Activated T-helper 1 cell treated with anti-CD3 and anti-CD28 coated beads, Interleukin-12 subunit alpha, Interleukin-12 subunit beta, Interleukin-2, Interleukin-4 antibody, amounts not matched to agents 30 ng/mL and 10 ng/mL and 1 ng/mL, durations not matched to agents 14 hours and 24 hours and 36 hours (primary cell): ENCODE measurements at regions of chr1 and their contacts with region 1.

Region 1: GRCh38 chr1:53220171-53220961 is at the start of gene CZIB:
- DNase-seq: peak; percentile 92
- H3K4me3 Mint-ChIP-seq: peak within 1 kb of the TSS; percentile 90
- H3K27ac Mint-ChIP-seq: peak within 1 kb of the TSS; percentile 97
- H3K4me1 Mint-ChIP-seq: peaks cover 30% of the 10 kb centered on the region
- H3K27me3 Mint-ChIP-seq: peaks cover 2% of the 10 kb centered on the region
- total RNA-seq, gene CZIB: 43.6 and 45.2 TPM in 2 replicates

Region 2: DNA sequence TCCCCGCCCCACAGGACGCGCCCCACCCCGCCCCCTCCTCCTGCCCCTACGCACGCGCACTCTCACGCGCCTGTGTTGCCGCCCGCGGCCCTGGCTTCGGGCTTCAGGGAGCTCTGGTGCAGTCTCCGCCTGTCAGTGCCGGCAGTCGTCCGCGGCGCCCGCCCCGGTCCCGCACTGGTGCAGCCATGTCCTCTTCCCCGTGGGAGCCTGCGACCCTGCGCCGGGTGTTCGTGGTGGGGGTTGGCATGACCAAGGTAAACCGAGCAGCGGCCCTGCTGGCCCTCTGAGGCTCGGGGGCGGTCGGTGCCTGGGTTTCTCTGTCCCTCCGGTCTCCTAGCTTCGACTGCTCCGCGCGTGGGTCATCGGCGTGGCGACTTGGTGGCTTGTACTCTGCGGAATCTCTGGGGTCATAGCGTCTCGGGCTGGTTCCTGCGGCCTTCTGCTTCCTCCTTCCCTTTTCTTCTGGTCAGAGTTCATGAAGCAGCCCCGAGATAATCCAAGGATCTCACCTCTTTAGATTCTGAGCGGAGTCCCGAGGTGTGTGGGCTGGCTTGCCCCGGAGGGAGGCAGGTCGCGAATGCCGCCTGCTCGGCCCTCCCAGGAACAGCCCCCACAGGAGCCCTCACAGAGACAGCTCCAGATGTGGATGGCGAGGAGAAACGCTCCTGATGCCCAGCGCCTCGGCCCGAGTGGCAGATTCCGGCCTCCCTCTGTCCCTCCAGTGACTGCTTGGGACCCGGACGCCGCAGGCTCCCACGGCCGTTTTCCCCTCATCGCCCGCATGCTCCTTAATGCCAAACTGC is 293.0 kb before region 1 on chr1 and contains the start of gene SCP2:
- intact Hi-C with region 1: loop called (anchors 2 kb)
- DNase-seq: peak; percentile 74
- H3K4me3 Mint-ChIP-seq: peak within 1 kb of the TSS; percentile 90
- H3K27ac Mint-ChIP-seq: peak within 1 kb of the TSS; percentile 83
- H3K4me1 Mint-ChIP-seq: peaks cover 15% of the 10 kb centered on the region
- H3K27me3 Mint-ChIP-seq: peaks cover 8% of the 10 kb centered on the region
- total RNA-seq, gene SCP2: 54.7 and 58.3 TPM in 2 replicates

Region 3: GRCh38 chr1:53238197-53239155 is 18.1 kb after region 1 on chr1 and contains the start of gene MAGOH:
- intact Hi-C with region 1: loop called (anchors 1 kb)
- DNase-seq: peak; percentile 93
- H3K4me3 Mint-ChIP-seq: peak within 1 kb of the TSS; percentile 97
- H3K27ac Mint-ChIP-seq: peak within 1 kb of the TSS; percentile 98
- H3K4me1 Mint-ChIP-seq: peaks cover 28% of the 10 kb centered on the region
- H3K27me3 Mint-ChIP-seq: no peaks in the 10 kb centered on the region
- total RNA-seq, gene MAGOH: 104 TPM in 2 replicates